Activated CD4-positive, alpha-beta memory T cell treated with anti-CD3 and anti-CD28 coated beads for 36 hours (primary cell): ENCODE measurements at regions of chr20 and their contacts with region 1.

Region 1: GRCh38 chr20:44495802-44496481 is 20.3 kb downstream of the TTPAL start:
- DNase-seq: no peak
- H3K4me3 Mint-ChIP-seq: no peak overlapping the region
- H3K27ac Mint-ChIP-seq: peak overlapping the region; percentile 88
- H3K4me1 Mint-ChIP-seq: peaks cover 47% of the 10 kb centered on the region
- H3K27me3 Mint-ChIP-seq: no peaks in the 10 kb centered on the region

Region 2: GRCh38 chr20:44210422-44211176 is 285.3 kb before region 1 on chr20 and contains the start of gene OSER1:
- CTCF ChIA-PET with region 1: no interaction called
- POLR2A ChIA-PET with region 1: no interaction called
- intact Hi-C with region 1: loop called (anchors 10 kb)
- DNase-seq: peak; percentile 99
- H3K4me3 Mint-ChIP-seq: peak within 1 kb of the TSS; percentile 98
- H3K27ac Mint-ChIP-seq: peak within 1 kb of the TSS; percentile 93
- H3K4me1 Mint-ChIP-seq: peaks cover 61% of the 10 kb centered on the region
- H3K27me3 Mint-ChIP-seq: peaks cover 1% of the 10 kb centered on the region
- total RNA-seq, gene OSER1: 23.4 to 24.2 TPM

Region 3: GRCh38 chr20:44475694-44476560 is 20.0 kb before region 1 on chr20 and contains the start of gene TTPAL:
- CTCF ChIA-PET with region 1: interaction called, 7 read pairs
- POLR2A ChIA-PET with region 1: interaction called, 3 read pairs
- intact Hi-C with region 1: loop called (anchors 1 kb)
- DNase-seq: peak; percentile 94
- H3K4me3 Mint-ChIP-seq: peak within 1 kb of the TSS; percentile 94
- H3K27ac Mint-ChIP-seq: peak within 1 kb of the TSS; percentile 93
- H3K4me1 Mint-ChIP-seq: peaks cover 22% of the 10 kb centered on the region
- H3K27me3 Mint-ChIP-seq: no peaks in the 10 kb centered on the region
- total RNA-seq, gene TTPAL: 18.1 to 18.6 TPM

Region 4: GRCh38 chr20:44552950-44553908 is 57.3 kb after region 1 on chr20:
- CTCF ChIA-PET with region 1: no interaction called
- POLR2A ChIA-PET with region 1: no interaction called
- intact Hi-C with region 1: loop called (anchors 5 kb)
- DNase-seq: no peak
- H3K4me3 Mint-ChIP-seq: no peak overlapping the region
- H3K27ac Mint-ChIP-seq: peak overlapping the region; percentile 65
- H3K4me1 Mint-ChIP-seq: peaks cover 16% of the 10 kb centered on the region
- H3K27me3 Mint-ChIP-seq: no peaks in the 10 kb centered on the region